AG04449 (cell line): ENCODE measurements at regions of chr16 and their contacts with region 1.

Region 1: DNA sequence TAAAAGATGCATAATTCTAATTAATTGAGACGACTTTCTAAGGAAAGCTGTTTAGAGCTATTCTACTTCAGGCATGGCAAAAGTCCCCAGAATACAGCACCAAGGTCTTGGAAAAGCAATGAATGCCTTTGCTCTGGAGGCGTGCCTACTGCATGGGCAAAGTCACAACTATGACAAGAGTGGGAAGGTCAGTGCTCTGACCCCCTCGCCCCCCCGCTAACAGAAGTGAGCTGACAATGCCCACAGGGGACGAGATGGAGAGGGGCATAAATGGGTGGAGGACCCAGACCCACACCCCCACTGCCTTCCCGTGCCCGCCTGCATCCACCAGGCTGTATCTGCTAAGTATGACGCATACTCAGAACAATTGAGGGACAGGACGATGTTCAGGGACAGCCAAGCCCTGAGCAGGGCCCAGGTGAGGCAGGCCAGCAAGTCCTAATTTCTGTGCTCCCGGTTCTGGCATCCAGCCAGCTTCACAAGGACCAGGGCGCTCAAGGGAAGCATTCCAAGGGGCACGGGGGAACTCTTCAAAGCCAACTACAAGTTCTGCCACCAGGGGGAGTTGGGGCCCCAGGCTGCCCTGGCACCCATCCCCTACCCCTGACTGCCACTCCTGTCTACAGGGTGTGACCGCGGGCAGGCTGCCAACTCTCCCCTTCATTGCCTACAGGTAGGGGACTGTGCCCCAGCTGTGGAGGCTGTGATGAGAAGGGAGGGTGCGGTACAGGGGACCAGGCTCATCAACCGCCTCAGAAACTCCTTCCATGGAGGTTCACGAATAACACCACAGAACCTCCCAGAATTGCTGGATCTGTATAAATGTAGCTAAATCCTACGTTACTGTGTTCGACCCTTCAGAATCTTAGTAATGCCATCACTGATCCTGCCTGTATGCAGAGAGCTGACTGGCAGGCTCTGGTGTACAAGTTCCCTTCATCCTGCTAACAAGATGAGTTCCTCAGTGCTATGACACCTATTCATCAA is 20.8 kb downstream of the NPRL3 start:
- DNase-seq: no peak
- H3K4me3 ChIP-seq: no peak overlapping the region
- CTCF ChIP-seq: peak; percentile 70

Region 2: GRCh38 chr16:129075-129474 is 11.4 kb after region 1 on chr16:
- CTCF ChIA-PET with region 1: interaction called, 54 read pairs
- POLR2A ChIA-PET with region 1: no interaction called
- DNase-seq: no peak
- H3K4me3 ChIP-seq: no peak overlapping the region
- CTCF ChIP-seq: no peak

Region 3: GRCh38 chr16:143456-143855 is 25.8 kb after region 1 on chr16:
- CTCF ChIA-PET with region 1: interaction called, 10 read pairs
- POLR2A ChIA-PET with region 1: no interaction called
- DNase-seq: no peak
- H3K4me3 ChIP-seq: no peak overlapping the region
- CTCF ChIP-seq: no peak

Region 4: DNA sequence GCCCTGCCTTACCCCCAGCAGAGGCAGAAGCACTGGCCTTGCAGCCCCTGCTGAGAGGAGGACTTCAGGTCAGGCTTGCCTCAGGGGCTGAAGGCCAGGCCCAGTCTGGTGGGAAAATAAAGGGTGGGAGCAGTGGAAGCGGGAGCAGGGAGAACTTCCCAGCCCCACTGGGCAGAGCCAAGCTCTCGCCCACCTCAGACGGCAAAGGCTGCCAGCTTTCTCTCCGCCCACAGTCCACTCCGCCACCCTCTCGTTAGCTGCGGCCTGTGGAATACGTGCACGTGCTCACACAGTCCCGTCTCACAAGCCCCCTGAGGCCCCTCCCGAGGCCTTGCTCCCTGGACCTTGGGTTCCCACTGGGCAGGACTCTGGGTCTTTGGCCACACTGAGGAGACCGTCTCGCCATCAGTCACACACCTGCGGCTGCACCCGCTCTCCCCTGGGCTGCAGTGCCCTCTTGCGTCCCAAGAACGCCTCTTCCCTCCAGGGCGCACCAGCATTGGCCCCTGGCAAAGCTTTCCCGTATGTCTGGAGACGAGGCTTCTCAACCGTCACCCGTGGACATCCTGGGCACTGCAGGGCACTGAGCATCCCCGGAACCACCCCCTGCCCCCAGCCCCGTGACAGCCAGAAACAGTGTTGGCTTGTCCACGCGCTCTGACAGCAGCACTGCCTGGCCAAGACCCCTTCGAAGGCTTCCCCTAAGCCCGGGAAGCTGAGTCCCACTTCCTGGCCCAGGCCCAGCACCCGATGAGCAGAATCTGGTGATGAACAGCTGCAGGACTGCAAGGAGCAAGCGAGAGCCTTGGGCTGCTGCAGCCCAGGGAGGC is 244.4 kb after region 1 on chr16:
- CTCF ChIA-PET with region 1: interaction called, 15 read pairs
- POLR2A ChIA-PET with region 1: no interaction called
- DNase-seq: no peak
- H3K4me3 ChIP-seq: no peak overlapping the region
- CTCF ChIP-seq: peak; percentile 88